Activated CD8-positive, alpha-beta T cell treated with anti-CD3 and anti-CD28 coated beads, Interleukin-2, amount 10 ng/mL, durations not matched to agents 7 days and 5 days (primary cell): ENCODE measurements at regions of chr1 and their contacts with region 1.

Region 1: DNA sequence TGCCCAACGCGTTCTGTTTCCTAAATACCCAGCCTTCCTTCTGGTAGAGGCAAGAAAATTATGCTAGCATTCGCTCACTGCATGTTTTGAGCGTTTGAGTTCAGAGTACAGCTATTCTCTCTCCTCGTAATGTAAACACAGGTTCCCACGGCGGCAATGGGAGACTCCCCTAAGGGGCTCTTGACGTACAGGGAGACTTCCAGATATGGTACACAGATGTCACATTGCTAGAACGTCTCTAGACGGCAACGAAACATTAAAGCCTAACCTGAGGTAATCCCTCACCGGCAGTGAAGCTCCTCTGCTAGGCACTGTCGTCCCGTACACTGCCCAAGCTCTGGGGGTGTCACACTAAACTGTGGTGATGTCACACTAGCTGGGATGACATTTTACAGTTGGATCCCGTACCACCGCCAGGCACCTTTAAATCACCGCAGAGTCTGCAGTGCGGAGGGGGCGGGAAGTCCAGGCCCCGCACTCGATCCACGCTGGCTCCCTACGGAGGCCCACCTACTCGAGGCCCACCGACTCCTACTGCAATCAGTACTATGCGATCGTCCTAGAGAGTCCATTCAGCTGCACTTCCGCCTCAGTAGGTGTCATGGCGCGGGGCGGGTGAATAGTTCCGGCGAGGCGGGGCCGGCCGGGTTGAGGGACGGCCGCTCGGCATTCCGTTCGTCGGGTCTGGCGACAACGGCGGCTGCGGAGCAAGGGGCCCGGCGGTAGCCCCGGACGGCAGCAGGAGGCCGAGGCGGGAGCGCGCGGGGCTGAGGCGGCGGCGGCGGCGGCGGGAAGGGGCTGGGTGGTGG is at the start of gene HIPK1:
- DNase-seq: peak; percentile 95
- ATAC-seq: peak; percentile 62
- H3K4me3 Mint-ChIP-seq: peak within 1 kb of the TSS; percentile 95
- H3K27ac Mint-ChIP-seq: peak within 1 kb of the TSS; percentile 99
- H3K4me1 Mint-ChIP-seq: peaks cover 45% of the 10 kb centered on the region
- H3K27me3 Mint-ChIP-seq: peaks cover under 1% of the 10 kb centered on the region
- total RNA-seq, gene HIPK1: 89.3 to 92.7 TPM

Region 2: DNA sequence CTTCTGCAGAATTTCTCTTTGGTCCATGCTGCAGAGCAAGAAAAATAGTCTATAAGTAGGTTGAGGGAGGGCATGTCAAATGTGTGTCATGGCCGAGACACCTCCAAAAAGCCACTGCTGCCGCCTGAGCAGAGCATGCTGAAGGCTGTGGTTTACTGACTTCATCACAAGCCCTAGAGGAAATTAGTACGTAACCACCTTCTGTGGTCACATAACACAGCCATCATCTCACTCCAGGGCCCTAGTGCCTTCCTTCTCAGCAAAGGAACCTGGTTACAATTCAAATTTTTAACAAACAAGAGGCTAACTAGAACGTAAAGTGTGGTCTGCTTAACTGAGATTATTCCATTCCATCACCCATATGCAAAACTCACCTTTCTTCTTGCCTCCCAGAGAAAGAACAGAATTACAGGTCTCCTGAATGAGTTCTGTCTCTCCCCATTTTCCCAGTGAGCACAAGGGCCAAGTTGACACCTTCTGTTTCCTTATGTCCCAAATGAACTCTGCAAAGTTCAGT is 57.5 kb before region 1 on chr1 and contains the start of gene PTPN22:
- CTCF ChIA-PET with region 1: interaction called, 33 read pairs
- POLR2A ChIA-PET with region 1: interaction called, 26 read pairs
- DNase-seq: peak; percentile 91
- ATAC-seq: peak; percentile 87
- H3K4me3 Mint-ChIP-seq: peak within 1 kb of the TSS; percentile 84
- H3K27ac Mint-ChIP-seq: peak within 1 kb of the TSS; percentile 99
- H3K4me1 Mint-ChIP-seq: peaks cover 75% of the 10 kb centered on the region
- H3K27me3 Mint-ChIP-seq: no peaks in the 10 kb centered on the region
- total RNA-seq, gene PTPN22: 74.8 to 78.9 TPM

Region 3: DNA sequence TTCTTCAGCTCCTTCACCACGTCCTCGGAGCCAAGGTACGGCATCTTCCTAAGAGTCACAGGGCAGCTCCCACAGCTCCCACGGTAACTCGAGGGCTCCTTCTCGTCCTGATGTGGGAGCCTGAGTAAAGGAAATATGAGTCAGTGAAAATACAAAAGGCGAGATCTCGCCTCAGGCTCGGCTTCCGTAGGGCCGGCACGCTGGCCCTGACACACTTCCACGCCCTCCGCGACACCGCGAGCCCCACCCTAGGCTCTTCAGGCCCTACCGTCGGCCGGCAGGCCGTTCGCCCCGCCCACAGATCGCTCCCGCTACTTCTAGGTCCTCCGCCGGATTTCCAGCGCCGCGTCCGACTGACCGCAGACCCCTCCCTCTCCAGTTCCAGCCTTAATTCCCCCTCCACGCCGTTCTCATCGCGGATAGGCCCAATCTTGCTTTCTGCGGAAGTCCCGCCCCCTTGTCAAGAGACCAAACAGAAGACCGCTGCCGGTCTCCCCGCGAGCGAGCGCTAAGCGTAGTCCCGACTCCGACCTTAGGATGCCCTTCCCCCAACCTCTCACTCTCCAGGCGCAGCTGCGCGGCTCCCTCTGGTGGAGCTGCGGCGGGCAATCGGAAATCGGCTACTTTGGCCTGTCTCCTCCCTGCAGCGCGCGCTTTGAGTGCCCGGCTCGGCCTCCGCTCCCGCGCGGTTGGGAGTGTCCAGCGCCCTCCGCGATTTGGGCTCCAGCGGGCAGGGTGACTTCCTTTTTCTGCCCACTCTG is 24.3 kb before region 1 on chr1 and contains the starts of genes AP4B1 and DCLRE1B:
- CTCF ChIA-PET with region 1: interaction called, 79 read pairs
- POLR2A ChIA-PET with region 1: interaction called, 110 read pairs
- DNase-seq: peak; percentile 100
- ATAC-seq: peak; percentile 91
- H3K4me3 Mint-ChIP-seq: peak within 1 kb of the TSS; percentile 97
- H3K27ac Mint-ChIP-seq: peak within 1 kb of the TSS; percentile 96
- H3K4me1 Mint-ChIP-seq: peaks cover 64% of the 10 kb centered on the region
- H3K27me3 Mint-ChIP-seq: no peaks in the 10 kb centered on the region
- total RNA-seq, gene AP4B1: 42.9 to 44.9 TPM
- total RNA-seq, gene DCLRE1B: 19.6 to 19.7 TPM

Region 4: DNA sequence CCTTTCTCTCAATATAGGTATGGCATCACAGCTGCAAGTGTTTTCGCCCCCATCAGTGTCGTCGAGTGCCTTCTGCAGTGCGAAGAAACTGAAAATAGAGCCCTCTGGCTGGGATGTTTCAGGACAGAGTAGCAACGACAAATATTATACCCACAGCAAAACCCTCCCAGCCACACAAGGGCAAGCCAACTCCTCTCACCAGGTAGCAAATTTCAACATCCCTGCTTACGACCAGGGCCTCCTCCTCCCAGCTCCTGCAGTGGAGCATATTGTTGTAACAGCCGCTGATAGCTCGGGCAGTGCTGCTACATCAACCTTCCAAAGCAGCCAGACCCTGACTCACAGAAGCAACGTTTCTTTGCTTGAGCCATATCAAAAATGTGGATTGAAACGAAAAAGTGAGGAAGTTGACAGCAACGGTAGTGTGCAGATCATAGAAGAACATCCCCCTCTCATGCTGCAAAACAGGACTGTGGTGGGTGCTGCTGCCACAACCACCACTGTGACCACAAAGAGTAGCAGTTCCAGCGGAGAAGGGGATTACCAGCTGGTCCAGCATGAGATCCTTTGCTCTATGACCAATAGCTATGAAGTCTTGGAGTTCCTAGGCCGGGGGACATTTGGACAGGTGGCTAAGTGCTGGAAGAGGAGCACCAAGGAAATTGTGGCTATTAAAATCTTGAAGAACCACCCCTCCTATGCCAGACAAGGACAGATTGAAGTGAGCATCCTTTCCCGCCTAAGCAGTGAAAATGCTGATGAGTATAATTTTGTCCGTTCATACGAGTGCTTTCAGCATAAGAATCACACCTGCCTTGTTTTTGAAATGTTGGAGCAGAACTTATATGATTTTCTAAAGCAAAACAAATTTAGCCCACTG is 11.5 kb after region 1 on chr1:
- CTCF ChIA-PET with region 1: interaction called, 121 read pairs
- POLR2A ChIA-PET with region 1: interaction called, 66 read pairs
- DNase-seq: peak; percentile 73
- ATAC-seq: peak; percentile 63
- H3K4me3 Mint-ChIP-seq: peak overlapping the region; percentile 65
- H3K27ac Mint-ChIP-seq: peak overlapping the region; percentile 86
- H3K4me1 Mint-ChIP-seq: peaks cover 76% of the 10 kb centered on the region
- H3K27me3 Mint-ChIP-seq: no peaks in the 10 kb centered on the region

Region 5: GRCh38 chr1:113963281-113963906 is 34.2 kb after region 1 on chr1:
- CTCF ChIA-PET with region 1: interaction called, 34 read pairs
- POLR2A ChIA-PET with region 1: no interaction called
- DNase-seq: no peak
- ATAC-seq: no peak
- H3K4me3 Mint-ChIP-seq: no peak overlapping the region
- H3K27ac Mint-ChIP-seq: no peak overlapping the region
- H3K4me1 Mint-ChIP-seq: peaks cover 6% of the 10 kb centered on the region
- H3K27me3 Mint-ChIP-seq: no peaks in the 10 kb centered on the region